Pancreas (tissue), 10 donors: ENCODE measurements at regions of chr2 and their contacts with region 1.

Region 1: GRCh38 chr2:165401285-165401852 is 68.1 kb upstream of the CSRNP3 start:
- DNase-seq: peak in 1 of 6 donors; percentile 20
- ATAC-seq: peak in 3 of 4 donors; percentile 82 to 88 (median 86)
- H3K4me3 ChIP-seq: no peak overlapping the region
- H3K27ac ChIP-seq: no peak overlapping the region
- H3K4me1 ChIP-seq: no peaks in the 10 kb centered on the region
- H3K27me3 ChIP-seq: peaks cover 0 to 4% (median 0%) of the 10 kb centered on the region in 4 donors
- CTCF ChIP-seq: peak; percentile 41 to 61 (median 57)

Region 2: DNA sequence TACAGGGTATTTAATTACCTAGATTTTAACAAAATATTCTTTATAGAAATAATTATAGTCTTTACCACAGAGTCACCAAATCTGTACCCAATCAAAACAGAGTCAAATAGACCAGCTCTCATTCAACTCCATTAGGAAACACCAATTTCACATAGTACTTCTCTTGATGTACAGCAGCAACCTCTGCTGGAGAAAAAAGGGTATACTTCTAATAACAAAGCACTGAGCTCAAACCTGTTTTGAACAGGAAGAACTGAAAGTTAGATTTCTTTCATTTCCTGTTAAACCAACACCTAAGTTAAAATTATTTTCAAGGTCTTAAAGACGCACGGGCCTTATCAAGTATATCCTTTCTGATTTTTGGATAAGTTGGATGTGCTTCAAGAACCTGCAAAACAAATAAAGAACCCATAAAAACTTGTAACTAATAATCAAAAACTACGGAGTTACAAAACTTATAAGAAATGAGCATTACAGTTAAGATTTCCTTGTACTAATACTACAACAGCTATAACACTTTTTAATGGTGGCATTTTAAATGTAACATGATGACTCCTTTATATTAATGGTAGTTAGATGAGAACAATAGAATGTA is 473.2 kb after region 1 on chr2:
- intact Hi-C with region 1: loop called in 2 of 3 experiments (anchors 10 kb)
- DNase-seq: peak in 1 of 6 donors; percentile 19
- ATAC-seq: peak; percentile 87 to 98 (median 96)
- H3K4me3 ChIP-seq: no peak overlapping the region
- H3K27ac ChIP-seq: no peak overlapping the region
- H3K4me1 ChIP-seq: no peaks in the 10 kb centered on the region
- H3K27me3 ChIP-seq: no peaks in the 10 kb centered on the region
- CTCF ChIP-seq: peak; percentile 40 to 72 (median 60)